Aorta (tissue), 5 donors: ENCODE measurements at regions of chrX and their contacts with region 1.

Region 1: GRCh38 chrX:24693453-24694202 is at the start of gene POLA1:
- DNase-seq: peak; percentile 96
- ATAC-seq: peak; percentile 98
- H3K4me3 ChIP-seq: peak within 1 kb of the TSS; percentile 4 to 74
- H3K27ac ChIP-seq: peak within 1 kb of the TSS in 1 of 2 donors; percentile 94
- H3K4me1 ChIP-seq: no peaks in the 10 kb centered on the region
- H3K27me3 ChIP-seq: no peaks in the 10 kb centered on the region
- total RNA-seq, gene POLA1: 10.4 to 15.6 TPM

Region 2: DNA sequence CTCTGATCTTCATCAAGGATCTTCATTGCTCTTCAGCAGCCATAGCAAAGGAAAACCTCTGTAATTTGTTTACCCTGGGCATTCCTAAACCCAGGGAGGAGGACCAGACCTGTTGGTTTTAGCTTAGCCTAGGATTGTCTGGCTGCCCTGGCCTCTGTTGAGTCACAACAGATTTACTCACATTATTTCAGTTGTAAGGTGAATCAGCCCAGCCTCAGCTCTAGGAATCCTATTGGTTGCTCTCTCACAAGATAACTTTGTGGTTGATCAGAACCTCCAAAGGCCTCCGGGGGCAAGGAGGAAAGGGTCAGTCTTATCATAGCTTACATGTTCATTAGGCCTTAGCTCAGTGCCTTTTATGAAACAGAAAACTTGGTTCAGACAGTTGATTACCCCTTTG is 187.6 kb before region 1 on chrX:
- intact Hi-C with region 1: loop called in 1 of 2 experiments (anchors 10 kb)
- DNase-seq: no peak
- ATAC-seq: no peak
- H3K4me3 ChIP-seq: no peak overlapping the region
- H3K27ac ChIP-seq: no peak overlapping the region
- H3K4me1 ChIP-seq: no peaks in the 10 kb centered on the region
- H3K27me3 ChIP-seq: no peaks in the 10 kb centered on the region

Region 3: GRCh38 chrX:24877857-24878650 is 184.4 kb after region 1 on chrX:
- intact Hi-C with region 1: no loop called
- DNase-seq: no peak
- ATAC-seq: no peak
- H3K4me3 ChIP-seq: no peak overlapping the region
- H3K27ac ChIP-seq: no peak overlapping the region
- H3K4me1 ChIP-seq: no peaks in the 10 kb centered on the region
- H3K27me3 ChIP-seq: no peaks in the 10 kb centered on the region